Dorsolateral prefrontal cortex (tissue), 120 donors: ENCODE measurements at regions of chr2 and their contacts with region 1.

Region 1: GRCh38 chr2:60998628-60999545 is 18.6 kb upstream of the PEX13 start:
- DNase-seq: no peak
- H3K4me3 ChIP-seq: no peak overlapping the region
- H3K27ac ChIP-seq: no peak overlapping the region
- H3K27me3 ChIP-seq: no peaks in the 10 kb centered on the region
- CTCF ChIP-seq: peak; percentile 19 to 91 (median 75)

Region 2: DNA sequence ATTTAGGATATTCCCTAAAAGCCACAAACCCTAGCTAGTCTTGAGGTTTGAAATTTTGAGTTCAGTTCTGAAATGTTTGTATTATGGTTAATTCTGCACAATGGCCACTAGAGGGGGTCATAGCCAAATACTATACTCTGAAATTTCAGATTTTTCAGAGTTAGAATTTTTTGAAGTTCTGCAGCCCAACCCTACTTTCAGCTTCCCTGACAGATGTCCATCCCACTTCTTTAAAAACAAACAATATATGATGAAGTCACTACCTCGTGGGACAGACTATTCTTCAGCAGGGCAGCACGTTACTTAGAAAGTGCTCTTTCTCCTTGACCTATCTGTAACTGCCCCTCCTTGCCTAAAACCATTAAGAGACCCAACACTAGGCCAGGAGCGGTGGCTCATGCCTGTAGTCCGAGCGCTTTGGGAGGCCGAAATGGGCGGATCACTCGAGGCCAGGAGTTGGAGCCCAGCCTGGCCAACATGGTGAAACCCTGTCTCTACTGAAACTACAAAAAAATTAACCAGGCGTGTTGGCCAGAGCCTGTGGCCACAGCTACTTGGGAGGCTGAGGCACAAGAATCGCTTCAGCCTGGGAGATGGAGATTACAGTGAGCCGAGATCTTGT is 291.0 kb before region 1 on chr2:
- intact Hi-C with region 1: loop called (anchors 2 to 5 kb)
- DNase-seq: no peak
- H3K4me3 ChIP-seq: no peak overlapping the region
- H3K27ac ChIP-seq: no peak overlapping the region
- H3K27me3 ChIP-seq: no peaks in the 10 kb centered on the region
- CTCF ChIP-seq: peak; percentile 60 to 92 (median 80)

Region 3: DNA sequence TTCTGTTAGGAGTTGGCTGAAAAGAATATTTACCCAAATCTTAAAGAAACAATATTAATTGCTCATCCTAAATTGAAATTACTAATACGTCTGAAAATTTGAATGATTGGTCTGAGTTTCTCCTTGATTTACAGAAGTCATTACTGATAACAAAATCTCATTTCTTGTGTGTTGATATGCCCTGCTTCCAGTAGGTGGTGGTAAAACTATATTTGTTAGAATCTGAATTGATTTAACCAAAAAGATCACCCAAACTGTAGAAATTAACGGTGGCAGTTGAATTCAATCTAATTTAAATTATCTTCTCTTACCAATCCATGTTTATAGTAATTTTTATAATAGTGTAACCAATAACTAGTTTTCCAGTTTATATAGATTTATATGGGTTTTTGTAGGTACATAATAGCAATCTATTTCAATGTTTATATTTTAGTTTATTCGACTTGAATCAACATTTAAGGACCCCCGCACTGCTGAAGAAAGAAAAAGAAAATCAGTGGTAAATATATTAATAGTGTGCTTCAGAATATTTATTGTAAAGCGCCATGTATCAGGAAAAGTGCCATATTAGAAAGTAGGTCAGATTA is 204.5 kb before region 1 on chr2:
- intact Hi-C with region 1: loop called (anchors 5 kb)
- DNase-seq: no peak
- H3K4me3 ChIP-seq: no peak overlapping the region
- H3K27ac ChIP-seq: no peak overlapping the region
- H3K27me3 ChIP-seq: no peaks in the 10 kb centered on the region
- CTCF ChIP-seq: peak; percentile 34 to 78 (median 60)

Region 4: GRCh38 chr2:61193670-61194571 is 195.0 kb after region 1 on chr2:
- intact Hi-C with region 1: no loop called
- DNase-seq: no peak
- H3K4me3 ChIP-seq: no peak overlapping the region
- H3K27ac ChIP-seq: peak overlapping the region in 13 of 59 donors; percentile 2 to 39 (median 17)
- H3K27me3 ChIP-seq: no peaks in the 10 kb centered on the region
- CTCF ChIP-seq: no peak